Activated CD4-positive, alpha-beta T cell treated with anti-CD3 and anti-CD28 coated beads, Interleukin-2, amount 10 ng/mL, durations not matched to agents 24 days and 14 days (primary cell): ENCODE measurements at regions of chr3 and their contacts with region 1.

Region 1: DNA sequence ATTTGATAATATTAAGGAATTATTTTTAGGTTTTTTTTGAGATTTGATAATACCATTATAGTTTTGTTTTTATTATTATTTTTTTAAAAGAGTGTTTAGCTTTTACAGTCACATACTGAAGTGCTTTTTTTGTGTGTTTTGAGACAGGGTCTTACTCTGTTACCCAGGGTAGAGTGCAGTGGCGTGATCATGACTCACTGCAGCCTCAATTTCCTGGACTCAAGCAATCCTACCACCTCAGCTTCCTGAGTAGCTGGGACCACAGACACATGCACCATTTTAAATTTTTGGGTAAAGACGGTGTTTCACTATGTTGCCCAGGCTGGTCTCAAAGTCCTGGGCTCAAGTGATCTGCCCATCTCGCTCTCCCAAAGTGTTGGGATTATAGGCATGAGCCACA is 73.0 kb downstream of the SUMF1 start:
- DNase-seq: peak; percentile 75
- H3K4me3 Mint-ChIP-seq: peak overlapping the region; percentile 20
- H3K27ac Mint-ChIP-seq: peak overlapping the region; percentile 78
- H3K4me1 Mint-ChIP-seq: peaks cover 43% of the 10 kb centered on the region
- H3K27me3 Mint-ChIP-seq: no peaks in the 10 kb centered on the region

Region 2: GRCh38 chr3:4409415-4409814 is 15.4 kb after region 1 on chr3:
- intact Hi-C with region 1: loop called (anchors 2 kb)
- DNase-seq: peak; percentile 71
- H3K4me3 Mint-ChIP-seq: peak overlapping the region; percentile 57
- H3K27ac Mint-ChIP-seq: peak overlapping the region; percentile 87
- H3K4me1 Mint-ChIP-seq: peaks cover 43% of the 10 kb centered on the region
- H3K27me3 Mint-ChIP-seq: no peaks in the 10 kb centered on the region